IMR-90 (cell line): ENCODE measurements at regions of chr3 and their contacts with region 1.

Region 1: GRCh38 chr3:127884041-127884440 is 31.0 kb upstream of the KBTBD12 start:
- DNase-seq: no peak
- ATAC-seq: no peak
- H3K4me3 ChIP-seq: no peak overlapping the region
- H3K27ac ChIP-seq: no peak overlapping the region
- H3K4me1 ChIP-seq: no peaks in the 10 kb centered on the region
- H3K27me3 ChIP-seq: peaks cover 31% of the 10 kb centered on the region
- CTCF ChIP-seq: no peak
- POLR2A ChIP-seq: no peak
- RAD21 ChIP-seq: no peak

Region 2: GRCh38 chr3:127940116-127940515 is 56.1 kb after region 1 on chr3:
- CTCF ChIA-PET with region 1: no interaction called
- POLR2A ChIA-PET with region 1: no interaction called
- dilution Hi-C with region 1: no loop called
- in situ Hi-C with region 1: no loop called
- intact Hi-C with region 1: loop called (anchors 2 kb)
- DNase-seq: no peak
- ATAC-seq: no peak
- H3K4me3 ChIP-seq: no peak overlapping the region
- H3K27ac ChIP-seq: no peak overlapping the region
- H3K4me1 ChIP-seq: no peaks in the 10 kb centered on the region
- H3K27me3 ChIP-seq: peaks cover 3% of the 10 kb centered on the region
- CTCF ChIP-seq: no peak
- POLR2A ChIP-seq: no peak
- RAD21 ChIP-seq: no peak